A673 (cell line): ENCODE measurements at regions of chr10 and their contacts with region 1.

Region 1: GRCh38 chr10:87861953-87862678 is 1.2 kb downstream of the KLLN start:
- DNase-seq: peak; percentile 97
- H3K4me3 ChIP-seq: peak overlapping the region; percentile 80
- H3K27ac ChIP-seq: peak overlapping the region; percentile 91
- H3K4me1 ChIP-seq: peaks cover 5% of the 10 kb centered on the region
- H3K27me3 ChIP-seq: no peaks in the 10 kb centered on the region
- CTCF ChIP-seq: no peak

Region 2: DNA sequence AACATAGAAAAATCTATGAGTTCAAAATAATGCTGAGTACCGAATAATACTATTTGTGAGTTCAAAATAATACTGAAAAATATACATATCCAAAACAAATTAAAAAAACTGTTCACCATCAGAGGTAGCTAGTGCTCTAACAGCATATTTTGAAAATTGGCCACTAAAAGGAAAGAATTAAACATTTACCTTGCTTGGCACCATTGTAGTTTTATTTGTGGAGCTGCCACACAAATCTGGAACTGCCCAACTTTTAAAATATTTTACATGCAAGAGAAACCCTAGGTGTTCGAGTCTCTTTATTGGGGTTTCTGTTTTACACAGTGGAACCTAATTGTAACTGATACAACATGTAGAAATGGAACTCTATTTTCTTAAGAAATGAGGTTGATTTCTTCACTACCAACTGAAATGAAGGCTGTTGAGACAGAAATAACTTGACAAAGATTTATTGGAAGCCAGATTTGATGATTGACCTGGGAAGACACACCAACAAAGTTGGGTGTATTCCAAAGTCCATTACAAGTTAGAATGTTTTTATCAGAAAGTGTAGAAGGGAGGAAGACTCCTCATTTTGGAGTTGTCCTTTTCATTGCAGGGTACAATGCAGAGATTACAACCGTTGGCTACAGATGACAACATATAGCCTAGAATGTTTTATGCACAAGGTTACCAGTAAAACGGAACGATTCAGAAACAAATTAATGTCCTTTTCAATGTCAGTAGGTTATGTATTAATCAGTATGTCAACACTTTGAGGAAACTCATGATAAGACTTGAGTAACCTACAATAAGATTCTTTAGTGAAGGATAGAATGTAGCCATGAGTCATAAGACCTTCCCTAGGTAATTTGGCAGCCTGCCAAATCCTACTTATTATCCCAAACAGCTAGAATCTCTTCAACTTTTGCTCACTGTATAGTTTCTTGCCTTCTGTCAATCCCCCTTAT is 276.3 kb before region 1 on chr10:
- CTCF ChIA-PET with region 1: no interaction called
- POLR2A ChIA-PET with region 1: no interaction called
- intact Hi-C with region 1: no loop called
- DNase-seq: peak; percentile 37
- H3K4me3 ChIP-seq: no peak overlapping the region
- H3K27ac ChIP-seq: no peak overlapping the region
- H3K4me1 ChIP-seq: no peaks in the 10 kb centered on the region
- H3K27me3 ChIP-seq: no peaks in the 10 kb centered on the region
- CTCF ChIP-seq: no peak

Region 3: DNA sequence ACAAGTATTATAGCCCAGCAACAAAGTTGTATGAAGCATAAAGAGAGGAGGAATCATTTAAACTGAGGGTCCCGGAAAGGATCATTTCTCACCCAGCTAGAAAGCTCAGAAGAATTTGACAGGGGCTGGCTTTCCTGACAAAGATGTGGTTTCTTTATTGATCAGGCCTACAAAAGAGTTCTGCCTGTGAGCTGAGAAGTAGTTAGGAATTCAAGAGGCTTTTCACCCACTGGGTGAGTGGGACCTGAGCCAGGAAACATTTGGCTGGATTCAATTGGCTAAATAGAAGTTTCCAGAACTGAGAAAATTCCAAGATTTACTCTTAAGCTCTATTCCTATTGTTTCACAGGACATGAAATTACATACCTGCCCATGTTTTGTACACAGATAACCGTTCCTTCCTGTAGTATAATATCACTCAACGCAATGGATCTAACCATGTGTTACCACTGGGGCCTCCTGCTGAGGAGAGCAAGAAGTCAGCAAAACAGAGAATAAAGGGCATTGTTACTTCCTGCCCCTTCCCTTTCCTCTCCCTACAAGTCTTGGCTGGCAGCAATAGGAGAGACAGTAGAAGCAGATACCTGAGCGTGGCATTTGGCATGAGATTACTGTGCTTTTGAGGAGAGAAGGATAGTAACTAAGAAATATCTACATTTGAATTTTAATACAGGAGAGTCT is 256.3 kb before region 1 on chr10:
- CTCF ChIA-PET with region 1: no interaction called
- POLR2A ChIA-PET with region 1: no interaction called
- intact Hi-C with region 1: no loop called
- DNase-seq: no peak
- H3K4me3 ChIP-seq: no peak overlapping the region
- H3K27ac ChIP-seq: no peak overlapping the region
- H3K4me1 ChIP-seq: peaks cover 5% of the 10 kb centered on the region
- H3K27me3 ChIP-seq: no peaks in the 10 kb centered on the region
- CTCF ChIP-seq: no peak

Region 4: GRCh38 chr10:87659571-87660483 is 202.3 kb before region 1 on chr10 and contains the start of gene PAPSS2:
- CTCF ChIA-PET with region 1: no interaction called
- POLR2A ChIA-PET with region 1: no interaction called
- intact Hi-C with region 1: loop called (anchors 5 kb)
- DNase-seq: peak; percentile 66
- H3K4me3 ChIP-seq: peak within 1 kb of the TSS; percentile 91
- H3K27ac ChIP-seq: peak within 1 kb of the TSS; percentile 69
- H3K4me1 ChIP-seq: peaks cover 22% of the 10 kb centered on the region
- H3K27me3 ChIP-seq: no peaks in the 10 kb centered on the region
- CTCF ChIP-seq: 0 out of 2 replicates have a peak, but pooled peaks have one; percentile 14
- total RNA-seq, gene PAPSS2: 10.2 and 14.0 TPM in 2 replicates

Region 5: GRCh38 chr10:87895430-87895829 is 33.3 kb after region 1 on chr10:
- CTCF ChIA-PET with region 1: no interaction called
- POLR2A ChIA-PET with region 1: no interaction called
- intact Hi-C with region 1: no loop called
- DNase-seq: no peak
- H3K4me3 ChIP-seq: no peak overlapping the region
- H3K27ac ChIP-seq: no peak overlapping the region
- H3K4me1 ChIP-seq: no peaks in the 10 kb centered on the region
- H3K27me3 ChIP-seq: no peaks in the 10 kb centered on the region
- CTCF ChIP-seq: no peak

Region 6: GRCh38 chr10:87925570-87925969 is 63.5 kb after region 1 on chr10:
- CTCF ChIA-PET with region 1: no interaction called
- POLR2A ChIA-PET with region 1: interaction called, 3 read pairs
- intact Hi-C with region 1: loop called (anchors 5 kb)
- DNase-seq: peak; percentile 76
- H3K4me3 ChIP-seq: no peak overlapping the region
- H3K27ac ChIP-seq: peak overlapping the region; percentile 83
- H3K4me1 ChIP-seq: peaks cover 86% of the 10 kb centered on the region
- H3K27me3 ChIP-seq: no peaks in the 10 kb centered on the region
- CTCF ChIP-seq: no peak

Region 7: DNA sequence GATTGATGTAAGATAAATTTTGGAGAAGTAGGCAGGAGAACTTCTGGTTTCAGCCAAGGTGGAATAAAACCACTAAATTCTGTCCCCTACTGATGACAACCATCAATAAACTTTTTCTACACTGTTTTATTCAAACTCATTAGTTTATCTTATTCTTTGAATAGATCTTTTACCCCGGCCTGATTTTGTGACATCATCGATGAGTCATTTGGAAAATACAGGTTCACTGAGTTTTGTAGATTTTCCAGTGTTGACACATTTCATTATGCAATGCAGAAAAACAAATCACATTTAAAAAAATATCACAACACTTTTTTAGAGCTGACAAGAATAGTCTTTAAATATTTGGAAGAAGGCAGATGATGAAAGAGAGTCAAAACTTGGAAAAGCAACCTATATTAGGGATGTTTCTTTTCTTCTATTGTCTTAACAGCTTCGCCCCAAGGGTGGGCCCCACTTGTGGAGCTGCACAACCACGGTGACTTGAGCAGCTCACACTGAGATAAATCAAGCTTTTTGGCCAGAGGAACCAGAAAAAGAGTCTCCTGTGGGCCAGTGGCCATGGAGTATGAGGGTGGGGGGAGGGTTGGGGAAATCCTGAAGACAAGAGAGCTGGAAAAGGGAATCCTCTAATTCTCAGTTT is 114.1 kb after region 1 on chr10:
- CTCF ChIA-PET with region 1: no interaction called
- POLR2A ChIA-PET with region 1: no interaction called
- intact Hi-C with region 1: loop called (anchors 10 kb)
- DNase-seq: no peak
- H3K4me3 ChIP-seq: no peak overlapping the region
- H3K27ac ChIP-seq: no peak overlapping the region
- H3K4me1 ChIP-seq: no peaks in the 10 kb centered on the region
- H3K27me3 ChIP-seq: no peaks in the 10 kb centered on the region
- CTCF ChIP-seq: no peak

Region 8: GRCh38 chr10:87991946-87992345 is 129.8 kb after region 1 on chr10:
- CTCF ChIA-PET with region 1: no interaction called
- POLR2A ChIA-PET with region 1: no interaction called
- intact Hi-C with region 1: no loop called
- DNase-seq: no peak
- H3K4me3 ChIP-seq: no peak overlapping the region
- H3K27ac ChIP-seq: no peak overlapping the region
- H3K4me1 ChIP-seq: no peaks in the 10 kb centered on the region
- H3K27me3 ChIP-seq: no peaks in the 10 kb centered on the region
- CTCF ChIP-seq: no peak

Region 9: DNA sequence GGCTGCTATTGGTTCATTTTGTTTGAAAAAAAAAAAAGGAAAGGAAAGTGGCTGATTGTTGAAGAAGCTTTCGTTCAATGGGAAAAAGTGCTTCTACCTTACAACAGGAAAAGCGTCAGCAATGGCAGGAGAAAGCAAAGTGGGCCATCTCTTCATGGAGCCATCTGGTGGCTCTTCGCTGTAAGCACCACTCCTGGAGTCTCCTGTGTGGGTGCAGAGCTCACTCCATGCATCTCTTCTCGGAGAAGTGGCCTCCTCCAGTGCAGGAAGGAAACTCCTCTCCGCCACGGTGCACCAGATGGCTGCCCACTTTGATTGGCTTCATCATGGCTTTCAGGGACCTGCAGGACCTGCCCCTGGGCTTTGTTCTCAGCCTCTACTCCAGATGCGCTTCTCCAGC is 252.3 kb after region 1 on chr10:
- CTCF ChIA-PET with region 1: interaction called, 14 read pairs
- POLR2A ChIA-PET with region 1: interaction called, 3 read pairs
- intact Hi-C with region 1: loop called (anchors 1 kb)
- DNase-seq: peak; percentile 81
- H3K4me3 ChIP-seq: no peak overlapping the region
- H3K27ac ChIP-seq: no peak overlapping the region
- H3K4me1 ChIP-seq: peaks cover 4% of the 10 kb centered on the region
- H3K27me3 ChIP-seq: no peaks in the 10 kb centered on the region
- CTCF ChIP-seq: peak; percentile 78

Region 10: DNA sequence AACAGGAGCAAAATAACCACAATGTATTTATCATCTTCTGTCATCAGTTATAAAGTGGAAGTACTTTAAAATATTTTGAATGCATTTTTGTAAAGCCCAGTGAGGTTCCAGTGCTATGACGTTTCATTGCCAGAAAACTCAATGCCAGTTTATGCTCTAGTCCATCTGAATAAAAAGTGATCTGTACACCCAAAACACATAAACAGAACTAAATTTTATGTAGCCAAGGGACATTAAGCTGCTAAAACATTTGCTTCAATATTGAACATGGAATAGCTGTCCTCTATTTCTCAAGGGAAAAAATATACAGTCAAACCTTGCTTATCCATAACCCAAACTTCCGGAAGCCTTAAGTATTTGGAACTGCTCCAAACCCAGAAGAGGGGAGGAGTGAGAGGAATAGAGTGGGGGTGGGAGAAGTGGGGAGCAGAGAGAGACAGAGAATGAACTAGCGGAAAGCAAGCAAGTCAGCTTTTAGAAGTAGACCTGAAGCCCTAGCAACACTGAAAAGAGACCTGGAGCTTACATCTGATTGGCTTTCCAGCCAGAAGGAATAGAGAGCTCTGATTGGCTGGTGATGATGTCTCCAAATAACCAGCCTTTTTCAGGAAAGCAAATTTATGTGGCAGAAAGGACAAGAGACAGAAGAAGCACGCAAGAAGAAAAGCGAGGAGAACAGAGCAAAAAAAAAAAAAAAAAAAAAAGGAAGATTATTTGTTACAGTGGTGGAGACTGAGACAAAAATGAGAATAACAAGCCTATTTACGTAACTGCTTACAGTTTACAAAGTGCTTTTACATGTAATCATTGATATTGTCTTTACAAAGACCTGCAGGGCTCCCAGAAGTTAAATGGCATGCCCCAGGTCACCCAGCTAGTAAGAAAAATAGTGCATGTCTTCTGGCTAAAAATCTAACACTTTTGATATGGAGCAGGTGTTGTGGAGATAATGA is 525.0 kb after region 1 on chr10:
- CTCF ChIA-PET with region 1: interaction called, 7 read pairs
- POLR2A ChIA-PET with region 1: no interaction called
- intact Hi-C with region 1: loop called (anchors 2 kb)
- DNase-seq: peak; percentile 73
- H3K4me3 ChIP-seq: no peak overlapping the region
- H3K27ac ChIP-seq: no peak overlapping the region
- H3K4me1 ChIP-seq: peaks cover 14% of the 10 kb centered on the region
- H3K27me3 ChIP-seq: no peaks in the 10 kb centered on the region
- CTCF ChIP-seq: no peak

Region 11: GRCh38 chr10:88553116-88553752 is 691.1 kb after region 1 on chr10:
- CTCF ChIA-PET with region 1: no interaction called
- POLR2A ChIA-PET with region 1: no interaction called
- intact Hi-C with region 1: loop called (anchors 5 kb)
- DNase-seq: peak; percentile 70
- H3K4me3 ChIP-seq: no peak overlapping the region
- H3K27ac ChIP-seq: no peak overlapping the region
- H3K4me1 ChIP-seq: peaks cover 10% of the 10 kb centered on the region
- H3K27me3 ChIP-seq: no peaks in the 10 kb centered on the region
- CTCF ChIP-seq: peak; percentile 82